ENCODE measurements at regions of chrX and their contacts with region 1.

Region 1: GRCh38 chrX:153554519-153555167 is 37.2 kb downstream of the ATP2B3 start:
- DNase-seq: peak; percentile 72
- ATAC-seq: peak; percentile 73
- H3K4me3 ChIP-seq: no peak overlapping the region
- H3K4me3 Mint-ChIP-seq: no peak overlapping the region
- H3K27ac ChIP-seq: no peak overlapping the region
- H3K27ac Mint-ChIP-seq: no peak overlapping the region
- H3K4me1 ChIP-seq: no peaks in the 10 kb centered on the region
- H3K4me1 Mint-ChIP-seq: no peaks in the 10 kb centered on the region
- H3K27me3 ChIP-seq: no peaks in the 10 kb centered on the region
- H3K27me3 Mint-ChIP-seq: no peaks in the 10 kb centered on the region
- CTCF ChIP-seq: peak; percentile 66

Region 2: DNA sequence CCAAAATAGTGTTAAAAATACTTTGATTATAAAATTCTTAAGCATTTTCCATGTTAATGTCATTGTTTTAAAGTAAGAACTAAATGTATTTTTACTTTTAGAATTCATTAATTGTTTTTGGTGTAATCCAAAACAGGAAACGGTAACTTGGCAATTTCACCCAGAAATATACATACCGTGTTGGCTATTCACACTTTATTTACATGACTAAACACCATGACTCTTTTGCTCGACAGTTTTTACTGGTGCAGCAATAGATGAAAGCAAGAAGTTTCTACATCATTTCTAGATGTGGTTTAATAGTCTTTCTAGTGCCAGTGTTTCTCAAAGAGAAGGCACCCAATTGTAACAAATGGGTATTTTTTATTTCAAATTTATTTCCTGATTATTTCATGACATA is 401.1 kb before region 1 on chrX:
- CTCF ChIA-PET with region 1: no interaction called
- POLR2A ChIA-PET with region 1: no interaction called
- intact Hi-C with region 1: no loop called
- DNase-seq: no peak
- ATAC-seq: no peak
- H3K4me3 ChIP-seq: no peak overlapping the region
- H3K4me3 Mint-ChIP-seq: no peak overlapping the region
- H3K27ac ChIP-seq: no peak overlapping the region
- H3K27ac Mint-ChIP-seq: no peak overlapping the region
- H3K4me1 ChIP-seq: no peaks in the 10 kb centered on the region
- H3K4me1 Mint-ChIP-seq: no peaks in the 10 kb centered on the region
- H3K27me3 ChIP-seq: peaks cover 0 to 2% (median 0%) of the 10 kb centered on the region in 4 experiments
- H3K27me3 Mint-ChIP-seq: peaks cover 16% of the 10 kb centered on the region
- CTCF ChIP-seq: no peak

Region 3: DNA sequence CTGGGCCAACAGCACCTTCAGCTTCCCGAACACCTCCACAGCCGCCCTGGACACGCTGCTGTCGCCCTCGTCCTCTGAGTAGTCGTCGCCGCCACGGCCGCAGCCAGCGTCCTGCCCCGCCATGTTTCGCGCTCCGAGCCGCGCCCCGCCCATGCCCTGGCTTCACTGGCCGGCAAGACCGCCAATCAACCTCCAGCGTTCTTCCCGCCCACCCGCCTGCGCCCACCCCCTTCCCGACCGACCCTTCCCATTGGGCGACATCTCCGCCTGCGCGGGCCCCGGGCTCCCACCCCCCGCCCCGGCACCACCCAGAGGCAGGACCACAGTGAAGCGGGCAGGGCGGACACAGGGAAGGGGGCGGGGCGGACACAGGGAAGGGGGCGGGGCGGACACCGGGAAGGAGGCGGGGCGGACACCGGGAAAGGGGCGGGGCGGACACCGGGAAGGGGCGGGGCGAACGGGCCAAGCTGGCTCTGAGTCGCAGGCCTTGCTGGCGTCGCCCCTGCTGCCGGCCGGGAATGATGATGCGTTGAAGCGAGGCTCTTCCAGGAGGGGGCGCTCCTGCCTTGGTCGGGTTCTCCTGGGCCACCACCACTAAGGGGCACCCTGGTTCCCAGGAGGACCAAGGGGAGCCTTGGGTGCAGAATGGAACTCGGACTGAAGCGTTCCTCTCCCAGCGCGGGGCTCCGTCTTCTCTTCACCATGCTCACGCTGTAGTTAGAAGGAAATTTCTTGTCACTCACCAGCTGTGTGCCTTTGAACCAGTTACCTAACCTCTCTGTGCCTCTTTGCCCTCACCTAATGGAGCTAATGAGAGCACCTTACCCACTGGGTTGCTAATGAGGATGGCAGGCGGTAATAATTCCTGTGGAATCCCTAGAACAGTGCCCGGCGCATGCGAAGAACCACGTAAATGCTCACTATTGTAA is 83.9 kb before region 1 on chrX and contains the start of gene HAUS7:
- CTCF ChIA-PET with region 1: no interaction called
- POLR2A ChIA-PET with region 1: no interaction called
- intact Hi-C with region 1: no loop called
- DNase-seq: peak; percentile 91
- ATAC-seq: peak; percentile 85
- H3K4me3 ChIP-seq: peak within 1 kb of the TSS; percentile 32 to 73 (median 66)
- H3K4me3 Mint-ChIP-seq: peak within 1 kb of the TSS; percentile 88
- H3K27ac ChIP-seq: peak within 1 kb of the TSS; percentile 34 to 39
- H3K27ac Mint-ChIP-seq: peak within 1 kb of the TSS; percentile 82
- H3K4me1 ChIP-seq: peaks cover 5 to 23% of the 10 kb centered on the region in 2 donors
- H3K4me1 Mint-ChIP-seq: peaks cover 16% of the 10 kb centered on the region
- H3K27me3 ChIP-seq: no peaks in the 10 kb centered on the region
- H3K27me3 Mint-ChIP-seq: no peaks in the 10 kb centered on the region
- CTCF ChIP-seq: peak; percentile 37
- total RNA-seq, gene HAUS7: 26.9 and 28.5 TPM in 2 replicates

Region 4: DNA sequence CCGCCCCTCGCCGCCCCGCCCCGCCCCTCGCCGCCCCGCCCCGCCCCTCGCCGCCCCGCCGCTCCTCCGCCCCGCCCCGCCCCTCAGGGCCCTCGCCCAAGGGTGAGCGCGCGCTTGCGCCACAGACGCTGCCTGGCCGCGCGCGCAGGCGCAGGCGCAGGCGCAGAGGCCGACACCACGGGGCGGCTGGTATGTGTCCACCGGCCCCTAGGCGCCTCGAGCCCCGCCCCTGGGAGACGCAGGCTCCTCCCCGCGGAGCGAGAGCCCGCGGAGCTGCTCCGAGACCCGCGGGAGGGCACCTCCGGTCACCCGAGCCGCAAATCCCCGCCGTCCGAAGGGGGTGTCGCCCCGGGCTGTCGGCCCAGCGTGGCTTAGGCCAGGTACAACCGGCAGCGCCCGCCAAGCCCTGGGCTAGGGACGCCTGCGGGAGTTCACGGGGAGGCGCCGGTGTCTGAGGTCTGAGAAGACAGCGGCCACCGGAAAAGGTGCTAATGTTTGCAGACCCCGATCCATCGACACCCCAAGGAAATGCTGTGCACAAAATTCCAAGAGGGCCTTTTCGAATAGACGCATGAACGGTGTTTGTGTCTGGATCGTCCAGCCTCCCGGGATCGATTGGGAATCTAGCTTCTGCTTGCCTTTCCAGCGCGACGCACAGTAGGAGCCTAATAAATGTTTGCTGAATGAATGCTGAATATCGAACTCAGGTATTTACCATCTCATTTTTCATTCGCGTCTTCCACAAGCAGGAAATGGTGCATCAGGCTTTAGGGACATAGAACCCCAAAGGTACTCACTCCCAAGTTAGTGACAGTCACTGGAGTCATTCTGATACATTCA is 44.8 kb after region 1 on chrX:
- CTCF ChIA-PET with region 1: interaction called, 3 read pairs
- POLR2A ChIA-PET with region 1: no interaction called
- intact Hi-C with region 1: loop called (anchors 1 kb)
- DNase-seq: peak; percentile 90
- ATAC-seq: peak; percentile 84
- H3K4me3 ChIP-seq: peak overlapping the region; percentile 40 to 77 (median 73)
- H3K4me3 Mint-ChIP-seq: peak overlapping the region; percentile 82
- H3K27ac ChIP-seq: peak overlapping the region; percentile 18 to 64
- H3K27ac Mint-ChIP-seq: peak overlapping the region; percentile 67
- H3K4me1 ChIP-seq: peaks cover 29 to 41% of the 10 kb centered on the region in 2 donors
- H3K4me1 Mint-ChIP-seq: peaks cover 41% of the 10 kb centered on the region
- H3K27me3 ChIP-seq: no peaks in the 10 kb centered on the region
- H3K27me3 Mint-ChIP-seq: no peaks in the 10 kb centered on the region
- CTCF ChIP-seq: no peak

Region 5: GRCh38 chrX:153662266-153662665 is 107.6 kb after region 1 on chrX:
- CTCF ChIA-PET with region 1: interaction called, 97 read pairs
- POLR2A ChIA-PET with region 1: no interaction called
- intact Hi-C with region 1: loop called (anchors 1 kb)
- DNase-seq: peak; percentile 73
- ATAC-seq: no peak
- H3K4me3 ChIP-seq: peak overlapping the region in 1 of 5 experiments; percentile 23
- H3K4me3 Mint-ChIP-seq: peak overlapping the region; percentile 50
- H3K27ac ChIP-seq: no peak overlapping the region
- H3K27ac Mint-ChIP-seq: no peak overlapping the region
- H3K4me1 ChIP-seq: peaks cover 3 to 5% of the 10 kb centered on the region in 2 donors
- H3K4me1 Mint-ChIP-seq: peaks cover 6% of the 10 kb centered on the region
- H3K27me3 ChIP-seq: peaks cover 0 to 3% (median 1%) of the 10 kb centered on the region in 4 experiments
- H3K27me3 Mint-ChIP-seq: peaks cover 34% of the 10 kb centered on the region
- CTCF ChIP-seq: peak; percentile 48